Sigmoid colon (tissue), 7 donors: ENCODE measurements at regions of chr10 and their contacts with region 1.

Region 1: GRCh38 chr10:114550756-114551635 is 107.1 kb downstream of the ABLIM1 start:
- DNase-seq: peak; percentile 74
- H3K4me3 ChIP-seq: peak overlapping the region in 3 of 4 donors; percentile 9 to 41 (median 32)
- H3K27ac ChIP-seq: peak overlapping the region; percentile 55 to 64 (median 60)
- H3K4me1 ChIP-seq: peaks cover 0 to 17% (median 14%) of the 10 kb centered on the region in 4 donors
- H3K27me3 ChIP-seq: no peaks in the 10 kb centered on the region
- CTCF ChIP-seq: peak; percentile 10 to 52 (median 47)
- EP300 ChIP-seq: no peak
- POLR2A ChIP-seq: no peak

Region 2: DNA sequence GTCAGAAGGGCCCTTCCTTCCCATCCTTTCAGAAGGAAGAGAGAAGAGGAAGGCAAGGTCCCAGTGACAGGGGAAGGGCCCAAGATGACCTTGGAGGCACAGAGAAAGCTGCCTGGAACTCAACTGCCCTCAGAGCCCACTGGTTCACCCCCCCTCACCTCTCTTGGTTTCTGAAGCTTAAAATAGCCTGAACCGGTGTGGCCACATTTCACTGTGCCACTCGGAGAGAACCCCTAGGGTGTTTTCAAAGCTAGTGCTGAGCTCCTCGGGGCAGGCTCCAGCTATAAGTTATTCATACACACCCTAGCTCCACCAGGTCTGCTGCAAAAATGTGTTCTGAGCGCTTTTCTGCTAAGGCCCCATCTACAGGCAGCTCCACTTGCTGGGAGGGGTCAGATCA is 568.2 kb before region 1 on chr10:
- intact Hi-C with region 1: no loop called
- DNase-seq: no peak
- H3K4me3 ChIP-seq: no peak overlapping the region
- H3K27ac ChIP-seq: no peak overlapping the region
- H3K4me1 ChIP-seq: no peaks in the 10 kb centered on the region
- H3K27me3 ChIP-seq: no peaks in the 10 kb centered on the region
- CTCF ChIP-seq: no peak
- EP300 ChIP-seq: no peak
- POLR2A ChIP-seq: no peak

Region 3: GRCh38 chr10:114470956-114471905 is 79.8 kb before region 1 on chr10:
- intact Hi-C with region 1: loop called (anchors 5 kb)
- DNase-seq: peak; percentile 76
- H3K4me3 ChIP-seq: no peak overlapping the region
- H3K27ac ChIP-seq: no peak overlapping the region
- H3K4me1 ChIP-seq: peaks cover 0 to 3% (median 0%) of the 10 kb centered on the region in 4 donors
- H3K27me3 ChIP-seq: no peaks in the 10 kb centered on the region
- CTCF ChIP-seq: peak in 3 of 4 experiments; percentile 77 to 82 (median 82)
- EP300 ChIP-seq: no peak
- POLR2A ChIP-seq: no peak

Region 4: GRCh38 chr10:114631666-114632417 is 80.8 kb after region 1 on chr10:
- intact Hi-C with region 1: loop called (anchors 5 kb)
- DNase-seq: peak; percentile 67
- H3K4me3 ChIP-seq: peak overlapping the region; percentile 33 to 61 (median 56)
- H3K27ac ChIP-seq: peak overlapping the region; percentile 32 to 78 (median 60)
- H3K4me1 ChIP-seq: peaks cover 0 to 47% (median 35%) of the 10 kb centered on the region in 4 donors
- H3K27me3 ChIP-seq: peaks cover 0 to 26% (median 0%) of the 10 kb centered on the region in 3 donors
- CTCF ChIP-seq: no peak
- EP300 ChIP-seq: no peak
- POLR2A ChIP-seq: no peak

Region 5: DNA sequence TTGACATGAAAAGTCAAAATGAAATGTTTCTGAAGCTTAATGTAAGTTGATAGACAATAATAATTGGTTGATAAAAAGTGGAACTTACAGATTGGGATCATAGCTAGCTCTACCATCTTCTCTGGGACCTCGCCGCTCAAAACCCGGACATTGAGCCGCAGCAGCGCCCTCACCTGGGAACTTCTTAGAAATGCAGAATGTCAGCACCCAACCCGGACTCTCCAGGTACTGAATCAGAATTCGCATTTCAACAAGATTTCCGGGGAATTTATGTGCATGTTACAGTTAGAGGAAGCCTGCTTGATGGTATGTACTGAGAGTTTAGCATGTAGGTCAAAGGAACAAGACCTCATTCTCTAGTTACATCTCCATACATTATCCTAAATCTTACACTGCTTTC is 143.8 kb after region 1 on chr10:
- intact Hi-C with region 1: loop called (anchors 5 kb)
- DNase-seq: no peak
- H3K4me3 ChIP-seq: no peak overlapping the region
- H3K27ac ChIP-seq: no peak overlapping the region
- H3K4me1 ChIP-seq: peaks cover 0 to 18% (median 8%) of the 10 kb centered on the region in 4 donors
- H3K27me3 ChIP-seq: no peaks in the 10 kb centered on the region
- CTCF ChIP-seq: no peak
- EP300 ChIP-seq: no peak
- POLR2A ChIP-seq: no peak

Region 6: DNA sequence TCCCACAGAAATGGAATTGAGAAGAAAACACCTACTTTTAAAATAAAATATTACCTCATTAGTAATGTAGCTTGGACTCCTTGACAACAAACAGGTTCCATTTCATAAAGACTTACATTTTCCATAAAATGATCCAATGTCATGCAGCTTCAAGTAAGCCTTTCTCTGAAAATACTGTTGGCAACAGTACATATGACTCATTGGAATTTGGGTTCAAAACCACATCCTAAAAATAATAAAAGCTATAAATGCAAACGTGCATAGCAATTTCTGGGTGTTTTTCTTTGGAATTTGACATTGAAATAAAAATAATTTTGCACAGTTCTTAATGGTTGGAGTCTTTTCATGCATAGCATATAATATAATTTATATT is 318.5 kb after region 1 on chr10:
- intact Hi-C with region 1: no loop called
- DNase-seq: no peak
- H3K4me3 ChIP-seq: no peak overlapping the region
- H3K27ac ChIP-seq: no peak overlapping the region
- H3K4me1 ChIP-seq: peaks cover 0 to 13% (median 0%) of the 10 kb centered on the region in 4 donors
- H3K27me3 ChIP-seq: no peaks in the 10 kb centered on the region
- CTCF ChIP-seq: no peak
- EP300 ChIP-seq: no peak
- POLR2A ChIP-seq: no peak

Region 7: DNA sequence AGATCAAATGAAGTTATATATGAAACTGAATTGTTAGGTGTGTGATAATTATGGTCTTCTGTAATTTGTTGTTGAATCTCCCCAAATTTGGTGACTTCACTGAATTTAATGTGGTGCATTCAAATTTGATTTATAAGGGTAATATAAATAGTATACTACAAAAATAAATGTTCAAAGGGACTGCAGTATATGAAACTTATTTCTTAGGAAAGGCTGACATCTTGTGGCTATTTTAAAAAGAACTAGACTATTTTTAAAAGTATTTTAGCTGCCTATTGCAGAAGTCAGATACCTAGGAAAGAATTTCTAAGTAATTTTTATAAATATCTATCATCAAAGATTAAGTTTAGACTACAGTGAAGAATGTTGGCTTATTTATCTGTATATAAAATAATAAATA is 578.8 kb after region 1 on chr10:
- intact Hi-C with region 1: loop called (anchors 5 kb)
- DNase-seq: no peak
- H3K4me3 ChIP-seq: no peak overlapping the region
- H3K27ac ChIP-seq: no peak overlapping the region
- H3K4me1 ChIP-seq: no peaks in the 10 kb centered on the region
- H3K27me3 ChIP-seq: no peaks in the 10 kb centered on the region
- CTCF ChIP-seq: peak in 2 of 4 experiments; percentile 13 to 18
- EP300 ChIP-seq: no peak
- POLR2A ChIP-seq: no peak